Psoas muscle (tissue), 8 donors: ENCODE measurements at regions of chr17 and their contacts with region 1.

Region 1: DNA sequence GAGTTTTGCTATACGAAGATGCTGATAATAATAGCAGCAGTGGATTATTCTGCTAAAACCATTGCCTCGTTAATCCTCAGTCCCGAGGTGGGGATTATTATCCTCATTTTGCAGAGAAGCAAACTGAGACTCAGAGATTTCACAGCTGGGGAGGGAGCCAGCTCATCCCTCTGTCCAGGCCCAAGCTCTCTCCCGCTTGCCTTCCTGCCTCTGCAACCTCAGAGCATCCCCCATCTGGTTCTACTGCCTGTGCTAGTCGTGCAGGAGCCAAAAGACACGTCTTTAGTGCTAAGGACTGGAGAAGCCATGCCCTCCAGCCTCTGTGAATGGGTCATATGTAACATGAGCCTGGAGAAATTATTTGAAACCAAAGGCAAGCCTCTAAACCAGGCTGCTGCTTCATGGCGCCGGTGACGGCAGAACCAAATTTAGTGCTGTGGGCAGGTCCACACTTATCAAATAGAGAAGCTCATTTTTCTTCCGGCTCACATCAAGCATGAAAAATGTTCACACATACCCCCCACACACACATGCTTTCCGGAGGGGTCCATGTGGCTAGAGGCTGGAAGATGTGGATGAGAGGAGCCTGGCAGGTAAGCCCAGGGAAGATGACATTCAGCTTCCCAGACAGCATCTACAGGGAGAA is 13.5 kb downstream of the MAPT start:
- DNase-seq: peak in 1 of 2 donors; percentile 81
- ATAC-seq: peak; percentile 82 to 90 (median 86)
- H3K4me3 ChIP-seq: peak overlapping the region; percentile 60
- H3K27ac ChIP-seq: peak overlapping the region; percentile 89
- H3K4me1 ChIP-seq: peaks cover 70% of the 10 kb centered on the region
- H3K27me3 ChIP-seq: no peaks in the 10 kb centered on the region
- CTCF ChIP-seq: no peak

Region 2: DNA sequence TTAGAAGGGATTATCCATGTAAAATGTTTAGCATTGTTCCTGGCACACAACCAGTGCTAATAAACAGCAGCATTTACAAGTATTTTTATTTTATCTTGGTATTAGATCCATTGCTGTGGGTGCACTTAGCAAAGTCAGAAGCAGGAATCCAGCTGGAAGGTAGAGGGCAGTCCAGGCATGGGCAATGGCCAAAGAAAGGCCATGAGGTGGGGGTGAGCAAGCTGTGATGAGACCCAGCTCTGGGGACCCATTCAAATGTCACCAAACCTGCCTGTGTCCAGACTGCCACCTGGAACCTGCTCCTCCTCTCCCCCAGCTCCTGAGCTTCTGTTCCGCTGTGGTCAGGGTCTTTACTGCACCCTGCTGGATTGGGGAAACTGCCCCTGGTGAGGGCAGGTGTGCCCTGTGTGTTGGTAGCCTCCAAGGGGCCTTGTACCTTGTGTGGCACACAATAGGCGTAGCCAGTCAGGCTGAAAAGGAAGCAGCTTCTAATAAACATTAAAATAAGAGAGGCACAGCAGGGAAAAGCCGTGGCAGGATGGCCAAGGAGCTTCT is 241.8 kb before region 1 on chr17:
- intact Hi-C with region 1: no loop called
- DNase-seq: no peak
- ATAC-seq: no peak
- H3K4me3 ChIP-seq: no peak overlapping the region
- H3K27ac ChIP-seq: no peak overlapping the region
- H3K4me1 ChIP-seq: no peaks in the 10 kb centered on the region
- H3K27me3 ChIP-seq: peaks cover 0 to 16% (median 6%) of the 10 kb centered on the region in 3 donors
- CTCF ChIP-seq: no peak

Region 3: GRCh38 chr17:45768000-45768399 is 139.9 kb before region 1 on chr17:
- intact Hi-C with region 1: no loop called
- DNase-seq: peak in 1 of 2 donors; percentile 28
- ATAC-seq: peak in 2 of 4 donors; percentile 30 to 37
- H3K4me3 ChIP-seq: no peak overlapping the region
- H3K27ac ChIP-seq: no peak overlapping the region
- H3K4me1 ChIP-seq: no peaks in the 10 kb centered on the region
- H3K27me3 ChIP-seq: peaks cover 0 to 26% (median 3%) of the 10 kb centered on the region in 3 donors
- CTCF ChIP-seq: no peak

Region 4: GRCh38 chr17:45942284-45942683 is 34.4 kb after region 1 on chr17:
- intact Hi-C with region 1: loop called in 1 of 2 experiments (anchors 5 kb)
- DNase-seq: peak; percentile 87 to 95
- ATAC-seq: peak; percentile 98 to 99 (median 99)
- H3K4me3 ChIP-seq: peak overlapping the region; percentile 9
- H3K27ac ChIP-seq: peak overlapping the region; percentile 82
- H3K4me1 ChIP-seq: peaks cover 52% of the 10 kb centered on the region
- H3K27me3 ChIP-seq: no peaks in the 10 kb centered on the region
- CTCF ChIP-seq: no peak

Region 5: GRCh38 chr17:46013502-46014165 is 105.8 kb after region 1 on chr17:
- intact Hi-C with region 1: no loop called
- DNase-seq: no peak
- ATAC-seq: no peak
- H3K4me3 ChIP-seq: no peak overlapping the region
- H3K27ac ChIP-seq: no peak overlapping the region
- H3K4me1 ChIP-seq: no peaks in the 10 kb centered on the region
- H3K27me3 ChIP-seq: no peaks in the 10 kb centered on the region
- CTCF ChIP-seq: no peak